ENCODE measurements at regions of chr9 and their contacts with region 1.

Region 1: GRCh38 chr9:90942555-90942954 is 140.9 kb downstream of the SYK start:
- DNase-seq: peak in 1 of 2 experiments; percentile 73
- H3K4me3 ChIP-seq: no peak overlapping the region
- H3K27ac ChIP-seq: no peak overlapping the region
- H3K4me1 ChIP-seq: peaks cover 31% of the 10 kb centered on the region
- H3K27me3 ChIP-seq: no peaks in the 10 kb centered on the region
- CTCF ChIP-seq: no peak

Region 2: GRCh38 chr9:90964101-90965020 is 21.8 kb after region 1 on chr9:
- CTCF ChIA-PET with region 1: no interaction called
- POLR2A ChIA-PET with region 1: no interaction called
- intact Hi-C with region 1: loop called (anchors 2 kb)
- DNase-seq: peak in 1 of 2 experiments; percentile 46
- H3K4me3 ChIP-seq: no peak overlapping the region
- H3K27ac ChIP-seq: no peak overlapping the region
- H3K4me1 ChIP-seq: peaks cover 13% of the 10 kb centered on the region
- H3K27me3 ChIP-seq: no peaks in the 10 kb centered on the region
- CTCF ChIP-seq: no peak

Region 3: DNA sequence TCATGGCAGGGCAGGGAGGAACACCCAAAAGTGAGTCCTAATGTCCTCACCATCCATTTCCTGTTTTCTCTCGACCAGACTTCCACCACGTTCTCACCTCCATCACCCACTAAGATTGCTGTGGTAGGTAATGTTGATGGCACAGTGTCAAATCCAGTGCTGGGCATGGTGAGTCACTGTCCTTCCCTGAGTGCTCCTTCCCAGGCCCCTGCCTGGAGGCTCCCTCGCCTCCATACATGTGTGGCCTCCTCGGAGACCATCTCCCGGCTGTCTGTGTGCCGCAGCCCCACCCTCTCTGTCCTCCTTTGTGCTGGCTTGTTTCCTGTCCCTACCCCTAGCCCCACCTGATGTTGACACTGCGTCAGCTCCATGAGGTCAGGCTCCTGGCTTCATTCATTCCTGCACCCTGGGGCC is 36.6 kb after region 1 on chr9:
- CTCF ChIA-PET with region 1: no interaction called
- POLR2A ChIA-PET with region 1: no interaction called
- intact Hi-C with region 1: no loop called
- DNase-seq: peak in 1 of 2 experiments; percentile 34
- H3K4me3 ChIP-seq: no peak overlapping the region
- H3K27ac ChIP-seq: no peak overlapping the region
- H3K4me1 ChIP-seq: no peaks in the 10 kb centered on the region
- H3K27me3 ChIP-seq: no peaks in the 10 kb centered on the region
- CTCF ChIP-seq: no peak

Measured in PC-9 (cell line).